ENCODE measurements at regions of chrX and their contacts with region 1.

Region 1: DNA sequence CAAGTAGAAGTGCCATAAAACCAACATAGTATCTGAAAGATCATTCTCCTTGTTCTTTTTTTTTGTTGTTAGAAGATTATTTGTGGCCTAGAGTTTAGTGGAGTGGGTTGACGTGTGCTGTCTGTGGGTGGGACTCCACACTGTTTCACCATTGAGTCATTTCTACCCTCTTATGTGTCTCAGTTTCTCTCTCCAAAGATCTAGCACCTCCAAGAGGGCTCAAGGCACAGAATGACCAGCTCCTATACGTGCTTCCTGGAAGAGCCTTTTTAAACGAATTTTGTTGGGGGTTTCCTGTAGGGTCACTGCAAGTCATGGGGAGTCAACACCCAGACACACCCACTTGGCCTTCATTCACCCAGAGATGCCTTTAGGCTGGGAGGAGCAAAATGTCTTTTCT is 150.1 kb downstream of the KLF8 start:
- DNase-seq: no peak
- ATAC-seq: no peak
- H3K4me3 ChIP-seq: no peak overlapping the region
- H3K4me3 Mint-ChIP-seq: no peak overlapping the region
- H3K27ac ChIP-seq: no peak overlapping the region
- H3K27ac Mint-ChIP-seq: peak overlapping the region; percentile 12
- H3K4me1 ChIP-seq: peaks cover 33% of the 10 kb centered on the region
- H3K4me1 Mint-ChIP-seq: peaks cover 43% of the 10 kb centered on the region
- H3K27me3 ChIP-seq: no peaks in the 10 kb centered on the region
- H3K27me3 Mint-ChIP-seq: no peaks in the 10 kb centered on the region
- CTCF ChIP-seq: no peak

Region 2: DNA sequence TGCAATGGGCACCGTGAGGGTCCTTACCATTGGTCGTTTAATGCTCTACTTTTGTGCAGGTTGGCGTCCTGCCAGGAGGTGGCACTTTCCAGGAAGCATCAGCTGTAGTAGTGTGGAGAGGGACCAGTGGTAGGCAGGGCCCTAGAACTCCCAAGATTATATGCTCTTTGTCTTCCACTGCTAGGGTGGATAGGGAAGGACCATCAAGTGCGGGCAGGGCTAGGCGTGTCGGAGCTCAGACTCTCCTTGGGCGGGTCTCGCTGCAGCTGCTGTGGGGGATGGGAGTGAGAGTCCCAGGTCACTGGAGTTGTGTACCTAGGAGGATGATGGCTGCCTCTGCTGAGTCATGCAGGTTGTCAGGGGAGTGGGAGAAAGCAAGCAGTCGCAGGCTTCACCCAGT is 15.4 kb before region 1 on chrX:
- CTCF ChIA-PET with region 1: no interaction called
- POLR2A ChIA-PET with region 1: no interaction called
- intact Hi-C with region 1: loop called in 1 of 2 experiments (anchors 1 kb)
- DNase-seq: no peak
- ATAC-seq: no peak
- H3K4me3 ChIP-seq: no peak overlapping the region
- H3K4me3 Mint-ChIP-seq: no peak overlapping the region
- H3K27ac ChIP-seq: no peak overlapping the region
- H3K27ac Mint-ChIP-seq: peak overlapping the region; percentile 45
- H3K4me1 ChIP-seq: peaks cover 45% of the 10 kb centered on the region
- H3K4me1 Mint-ChIP-seq: peaks cover 49% of the 10 kb centered on the region
- H3K27me3 ChIP-seq: no peaks in the 10 kb centered on the region
- H3K27me3 Mint-ChIP-seq: no peaks in the 10 kb centered on the region
- CTCF ChIP-seq: no peak

Measured in CD8-positive, alpha-beta T cell (primary cell).